Activated naive CD4-positive, alpha-beta T cell treated with anti-CD3 and anti-CD28 coated beads, Interleukin-2, amount 10 ng/mL, durations not matched to agents 7 days and 5 days (primary cell): ENCODE measurements at regions of chr20 and their contacts with region 1.

Region 1: DNA sequence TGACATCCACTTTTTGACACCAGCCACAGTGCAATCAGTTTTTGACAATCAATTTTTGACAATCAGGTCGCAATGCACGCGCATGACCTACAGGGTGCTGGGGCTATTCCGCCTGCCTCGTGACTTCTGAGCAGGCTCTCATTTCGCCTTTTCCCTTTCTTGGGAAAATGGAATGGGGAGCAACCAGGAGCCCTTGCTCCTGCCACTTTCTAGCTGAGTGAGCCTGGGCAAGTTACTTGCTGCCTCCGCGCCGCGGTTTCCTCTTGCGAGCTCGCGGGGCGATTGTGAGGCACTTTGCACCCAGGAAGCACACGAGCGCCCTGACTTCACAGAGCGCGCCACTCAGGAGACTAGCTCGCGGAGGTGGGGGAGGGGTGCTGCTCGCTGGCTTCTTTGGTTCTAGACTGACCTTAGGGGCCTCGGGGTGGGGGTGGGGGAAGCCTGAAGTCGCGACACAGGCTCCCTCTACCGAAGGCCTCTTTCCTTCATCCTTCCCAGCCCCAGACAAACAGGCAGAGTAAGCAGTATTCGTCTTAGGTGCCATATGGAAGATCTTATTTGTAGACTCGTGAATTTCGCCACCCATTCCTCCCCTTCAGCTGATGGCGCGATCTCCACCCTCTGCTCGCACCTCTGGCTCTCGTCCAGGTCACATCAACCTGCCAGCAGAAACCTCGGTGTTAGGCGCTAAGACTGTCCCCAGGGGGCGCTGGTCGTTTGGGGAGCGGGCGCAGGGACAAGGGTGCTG is 4.6 kb downstream of the TP53TG5 start:
- DNase-seq: peak; percentile 90
- H3K4me3 Mint-ChIP-seq: peak overlapping the region; percentile 70
- H3K27ac Mint-ChIP-seq: peak overlapping the region; percentile 87
- H3K4me1 Mint-ChIP-seq: peaks cover 44% of the 10 kb centered on the region
- H3K27me3 Mint-ChIP-seq: no peaks in the 10 kb centered on the region

Region 2: GRCh38 chr20:45153147-45153546 is 220.4 kb before region 1 on chr20:
- CTCF ChIA-PET with region 1: no interaction called
- DNase-seq: no peak
- H3K4me3 Mint-ChIP-seq: no peak overlapping the region
- H3K27ac Mint-ChIP-seq: no peak overlapping the region
- H3K4me1 Mint-ChIP-seq: no peaks in the 10 kb centered on the region
- H3K27me3 Mint-ChIP-seq: peaks cover 61% of the 10 kb centered on the region

Region 3: DNA sequence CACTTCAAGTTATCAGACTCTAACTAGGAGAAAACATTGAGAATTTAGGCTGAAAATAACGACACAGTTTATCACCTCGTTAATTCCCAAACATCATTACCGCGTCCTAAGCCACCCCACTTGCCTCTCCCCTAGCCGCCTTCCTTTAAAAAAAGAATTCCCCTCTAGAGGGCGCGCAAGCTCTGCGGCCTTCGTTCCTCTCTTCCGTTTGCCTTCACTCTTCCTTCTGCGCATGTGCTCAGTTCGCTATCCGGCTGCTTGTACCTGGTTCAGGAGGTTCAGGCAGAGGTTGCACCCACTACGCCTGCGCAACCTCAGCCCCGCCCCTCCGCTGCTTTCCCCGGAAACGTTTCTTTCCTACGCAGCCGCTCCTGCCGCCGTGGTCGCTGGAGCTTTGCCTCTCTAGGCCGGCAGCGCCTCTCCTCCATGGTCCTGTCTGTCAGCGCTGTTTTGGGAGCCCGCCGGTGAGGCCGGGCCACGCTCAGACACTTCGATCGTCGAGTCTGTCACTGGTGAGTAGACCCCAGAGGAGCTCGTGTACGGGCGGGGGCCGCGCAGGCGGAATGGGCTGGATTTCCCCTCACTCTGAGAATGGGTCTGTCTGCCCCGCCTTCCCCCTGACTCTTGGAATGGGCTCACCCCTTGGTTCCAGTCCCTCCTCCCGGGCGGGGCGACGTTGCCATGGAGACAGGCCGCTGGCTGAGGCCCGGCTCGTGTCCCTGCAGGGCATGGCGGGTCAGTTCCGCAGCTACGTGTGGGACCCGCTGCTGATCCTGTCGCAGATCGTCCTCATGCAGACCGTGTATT is 10.5 kb before region 1 on chr20 and contains the start of gene SYS1:
- CTCF ChIA-PET with region 1: interaction called, 51 read pairs
- DNase-seq: peak; percentile 99
- H3K4me3 Mint-ChIP-seq: peak within 1 kb of the TSS; percentile 91
- H3K27ac Mint-ChIP-seq: peak within 1 kb of the TSS; percentile 91
- H3K4me1 Mint-ChIP-seq: peaks cover 54% of the 10 kb centered on the region
- H3K27me3 Mint-ChIP-seq: no peaks in the 10 kb centered on the region

Region 4: DNA sequence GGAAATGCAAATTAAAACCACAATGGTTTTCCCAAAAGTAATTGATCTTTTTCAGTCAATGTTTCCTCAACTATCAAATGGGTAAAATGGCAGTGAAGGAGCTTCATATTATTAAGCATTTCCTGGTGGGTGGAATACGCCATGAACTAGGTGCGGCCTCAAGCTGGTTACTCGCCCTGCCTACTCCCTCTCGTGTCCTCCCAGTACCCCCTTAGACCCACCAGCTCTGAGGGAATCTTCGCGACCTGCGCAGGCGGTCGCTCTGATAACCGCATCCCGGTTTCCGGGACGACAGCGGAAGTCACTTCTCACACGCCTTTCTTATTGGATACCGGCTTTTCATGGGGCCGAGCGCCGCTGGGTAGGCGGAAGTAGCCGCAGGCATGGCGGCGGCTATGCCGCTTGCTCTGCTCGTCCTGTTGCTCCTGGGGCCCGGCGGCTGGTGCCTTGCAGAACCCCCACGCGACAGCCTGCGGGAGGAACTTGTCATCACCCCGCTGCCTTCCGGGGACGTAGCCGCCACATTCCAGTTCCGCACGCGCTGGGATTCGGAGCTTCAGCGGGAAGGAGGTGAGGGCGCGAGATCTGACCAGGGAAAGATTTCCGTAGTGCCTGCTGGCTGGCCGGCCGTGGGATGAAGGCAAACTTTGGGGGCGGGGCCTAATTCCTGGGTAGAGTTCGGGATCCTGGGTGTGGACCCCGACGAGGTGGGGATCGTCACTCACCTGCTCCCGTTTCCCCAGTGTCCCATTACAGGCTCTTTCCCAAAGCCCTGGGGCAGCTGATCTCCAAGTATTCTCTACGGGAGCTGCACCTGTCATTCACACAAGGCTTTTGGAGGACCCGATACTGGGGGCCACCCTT is 42.5 kb after region 1 on chr20 and contains the start of gene PIGT:
- CTCF ChIA-PET with region 1: interaction called, 17 read pairs
- DNase-seq: peak; percentile 93
- H3K4me3 Mint-ChIP-seq: peak within 1 kb of the TSS; percentile 92
- H3K27ac Mint-ChIP-seq: peak within 1 kb of the TSS; percentile 91
- H3K4me1 Mint-ChIP-seq: peaks cover 34% of the 10 kb centered on the region
- H3K27me3 Mint-ChIP-seq: peaks cover 3% of the 10 kb centered on the region

Region 5: GRCh38 chr20:45450097-45450818 is 76.7 kb after region 1 on chr20:
- CTCF ChIA-PET with region 1: interaction called, 72 read pairs
- DNase-seq: peak; percentile 41
- H3K4me3 Mint-ChIP-seq: no peak overlapping the region
- H3K27ac Mint-ChIP-seq: no peak overlapping the region
- H3K4me1 Mint-ChIP-seq: peaks cover 11% of the 10 kb centered on the region
- H3K27me3 Mint-ChIP-seq: peaks cover 24% of the 10 kb centered on the region